ENCODE measurements at regions of chr10 and their contacts with region 1.

Region 1: DNA sequence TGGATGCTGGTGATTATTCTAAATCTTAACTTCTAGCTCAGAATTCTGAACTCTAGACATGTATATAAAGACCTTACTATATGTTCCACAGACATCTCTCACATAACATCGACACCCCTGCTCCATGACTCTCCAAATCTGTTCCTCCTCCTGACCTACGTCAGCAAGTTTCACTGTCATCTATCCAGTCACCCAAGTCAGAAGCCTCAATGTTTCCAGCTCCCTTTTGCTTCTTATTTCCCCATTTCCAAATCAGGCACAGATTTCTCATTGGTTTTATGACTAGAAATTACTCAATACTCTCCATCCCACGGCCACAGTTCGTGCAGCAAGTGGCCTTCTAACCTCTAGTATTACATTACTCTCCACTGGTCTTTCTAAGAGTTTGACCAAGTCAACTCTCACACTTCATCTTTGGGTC is 28.5 kb downstream of the EPC1 start:
- DNase-seq: peak; percentile 75
- ATAC-seq: peak; percentile 79
- H3K4me3 ChIP-seq: peak overlapping the region; percentile 6; the same call in 1 of the 2 replicates
- H3K27ac ChIP-seq: peak overlapping the region; percentile 98
- H3K4me1 ChIP-seq: peaks cover 58% of the 10 kb centered on the region
- H3K27me3 ChIP-seq: no peaks in the 10 kb centered on the region
- CTCF ChIP-seq: no peak
- EP300 ChIP-seq: peak; percentile 45 to 89; a peak in 2 of 4 replicates
- POLR2A ChIP-seq: no peak; the same call in 1 of the 2 replicates
- RAD21 ChIP-seq: no peak

Region 2: GRCh38 chr10:32332299-32332750 is 13.8 kb after region 1 on chr10:
- CTCF ChIA-PET with region 1: interaction called, 5 read pairs
- POLR2A ChIA-PET with region 1: interaction called, 16 read pairs
- RAD21 ChIA-PET with region 1: interaction called, 8 read pairs
- SMC1A ChIA-PET with region 1: interaction called, 205 read pairs
- in situ Hi-C with region 1: no loop called
- intact Hi-C with region 1: no loop called
- DNase-seq: peak; percentile 93
- ATAC-seq: peak; percentile 91
- H3K4me3 ChIP-seq: peak overlapping the region; percentile 6; the same call in 1 of the 2 replicates
- H3K27ac ChIP-seq: peak overlapping the region; percentile 80
- H3K4me1 ChIP-seq: peaks cover 37% of the 10 kb centered on the region
- H3K27me3 ChIP-seq: no peaks in the 10 kb centered on the region
- CTCF ChIP-seq: no peak
- EP300 ChIP-seq: peak; percentile 96; a peak in 3 of 4 replicates
- POLR2A ChIP-seq: peak; percentile 82
- RAD21 ChIP-seq: no peak

Measured in GM12878 (cell line).